ENCODE measurements at regions of chr9 and their contacts with region 1.

Region 1: DNA sequence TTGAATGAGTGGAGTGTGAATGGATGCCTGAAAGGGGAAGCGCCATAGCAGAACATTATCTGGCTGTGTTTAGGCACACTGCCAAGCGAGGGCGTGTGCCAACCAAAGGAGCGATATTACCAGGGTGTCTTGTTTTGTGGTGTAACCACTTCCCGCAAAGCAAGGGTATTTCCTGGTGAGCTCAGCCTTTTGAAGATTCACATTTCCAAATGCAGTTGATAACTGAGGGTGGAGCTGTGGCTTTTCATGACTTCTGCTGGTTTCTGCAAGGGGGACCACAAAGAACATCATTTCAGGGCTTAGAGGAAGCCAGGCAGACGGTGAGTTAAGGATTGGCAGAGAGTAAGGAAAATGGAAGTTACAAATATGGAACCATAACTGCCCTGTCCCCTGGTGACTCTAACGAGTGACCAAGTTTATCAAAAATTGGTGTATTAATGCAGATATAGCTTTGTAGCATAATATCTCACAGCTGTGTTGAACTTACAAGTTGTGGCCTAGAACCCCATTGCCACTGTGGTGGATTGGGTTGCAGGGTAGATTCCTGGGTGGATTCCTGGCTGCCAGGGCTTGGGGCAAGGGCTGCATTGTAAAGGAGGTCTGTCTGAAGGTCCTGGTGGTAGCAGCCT is 71.4 kb downstream of the RALGPS1 start:
- DNase-seq: peak; percentile 91
- ATAC-seq: peak; percentile 68
- H3K4me3 Mint-ChIP-seq: peak overlapping the region; percentile 19
- H3K27ac Mint-ChIP-seq: peak overlapping the region; percentile 80
- H3K4me1 Mint-ChIP-seq: peaks cover 42% of the 10 kb centered on the region
- H3K27me3 Mint-ChIP-seq: peaks cover 72% of the 10 kb centered on the region
- CTCF ChIP-seq: no peak

Region 2: GRCh38 chr9:126953041-126953809 is 32.8 kb before region 1 on chr9:
- CTCF ChIA-PET with region 1: no interaction called
- POLR2A ChIA-PET with region 1: no interaction called
- intact Hi-C with region 1: no loop called
- DNase-seq: no peak
- ATAC-seq: no peak
- H3K4me3 Mint-ChIP-seq: no peak overlapping the region
- H3K27ac Mint-ChIP-seq: no peak overlapping the region
- H3K4me1 Mint-ChIP-seq: no peaks in the 10 kb centered on the region
- H3K27me3 Mint-ChIP-seq: peaks cover 3% of the 10 kb centered on the region
- CTCF ChIP-seq: no peak

Region 3: GRCh38 chr9:127004946-127005769 is 19.2 kb after region 1 on chr9:
- CTCF ChIA-PET with region 1: interaction called, 17 read pairs
- POLR2A ChIA-PET with region 1: interaction called, 5 read pairs
- intact Hi-C with region 1: loop called (anchors 1 kb)
- DNase-seq: peak; percentile 90
- ATAC-seq: peak; percentile 98
- H3K4me3 Mint-ChIP-seq: no peak overlapping the region
- H3K27ac Mint-ChIP-seq: peak overlapping the region; percentile 40
- H3K4me1 Mint-ChIP-seq: peaks cover 18% of the 10 kb centered on the region
- H3K27me3 Mint-ChIP-seq: peaks cover 25% of the 10 kb centered on the region
- CTCF ChIP-seq: no peak

Region 4: GRCh38 chr9:127122176-127123063 is 136.4 kb after region 1 on chr9 and contains the start of gene ANGPTL2:
- CTCF ChIA-PET with region 1: no interaction called
- POLR2A ChIA-PET with region 1: no interaction called
- intact Hi-C with region 1: no loop called
- DNase-seq: peak; percentile 49
- ATAC-seq: peak; percentile 78
- H3K4me3 Mint-ChIP-seq: no peak within 1 kb of the TSS
- H3K27ac Mint-ChIP-seq: no peak within 1 kb of the TSS
- H3K4me1 Mint-ChIP-seq: no peaks in the 10 kb centered on the region
- H3K27me3 Mint-ChIP-seq: peaks cover 25% of the 10 kb centered on the region
- CTCF ChIP-seq: no peak
- total RNA-seq, gene ANGPTL2: not detected

Region 5: DNA sequence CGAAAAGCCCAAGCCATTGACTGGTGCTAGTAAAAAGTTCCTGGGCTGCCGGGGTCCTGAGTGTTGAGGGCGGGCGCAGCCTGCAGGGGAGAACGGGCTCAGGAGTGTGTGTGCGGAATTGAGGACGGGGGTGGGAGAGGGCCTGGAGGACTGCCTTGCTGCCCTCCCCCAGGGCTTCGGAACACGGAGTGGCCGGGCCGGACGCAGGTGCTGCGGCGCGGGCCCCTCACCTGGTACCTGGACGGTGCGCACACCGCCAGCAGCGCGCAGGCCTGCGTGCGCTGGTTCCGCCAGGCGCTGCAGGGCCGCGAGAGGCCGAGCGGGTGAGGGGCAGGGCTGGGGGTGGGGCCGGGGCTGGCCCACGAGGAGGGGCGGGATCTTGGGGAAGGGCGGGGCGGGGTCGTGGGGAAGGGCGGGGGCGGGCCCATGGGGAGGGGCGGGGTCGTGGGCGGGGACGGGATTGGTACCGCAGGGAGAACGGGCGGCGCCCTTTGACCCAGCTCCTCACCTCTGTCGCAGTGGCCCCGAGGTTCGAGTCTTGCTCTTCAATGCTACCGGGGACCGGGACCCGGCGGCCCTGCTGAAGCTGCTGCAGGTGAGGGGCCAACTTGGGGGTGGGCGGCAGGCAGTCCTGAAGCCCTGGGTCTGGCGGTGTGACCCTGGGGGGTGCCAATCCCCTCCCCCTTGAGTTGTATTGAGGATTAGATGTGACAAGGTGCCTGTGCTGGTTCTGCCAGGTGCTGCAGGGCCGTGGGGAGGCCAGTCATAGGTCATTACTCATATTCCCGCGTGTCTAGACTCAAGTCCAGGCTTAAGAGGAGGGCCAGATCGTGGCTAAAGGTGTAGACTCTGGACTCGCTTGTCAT is 823.8 kb after region 1 on chr9:
- CTCF ChIA-PET with region 1: no interaction called
- POLR2A ChIA-PET with region 1: no interaction called
- intact Hi-C with region 1: no loop called
- DNase-seq: no peak
- ATAC-seq: no peak
- H3K4me3 Mint-ChIP-seq: no peak overlapping the region
- H3K27ac Mint-ChIP-seq: no peak overlapping the region
- H3K4me1 Mint-ChIP-seq: peaks cover 2% of the 10 kb centered on the region
- H3K27me3 Mint-ChIP-seq: no peaks in the 10 kb centered on the region
- CTCF ChIP-seq: no peak